HepG2 (cell line): ENCODE measurements at regions of chrX and their contacts with region 1.

Region 1: DNA sequence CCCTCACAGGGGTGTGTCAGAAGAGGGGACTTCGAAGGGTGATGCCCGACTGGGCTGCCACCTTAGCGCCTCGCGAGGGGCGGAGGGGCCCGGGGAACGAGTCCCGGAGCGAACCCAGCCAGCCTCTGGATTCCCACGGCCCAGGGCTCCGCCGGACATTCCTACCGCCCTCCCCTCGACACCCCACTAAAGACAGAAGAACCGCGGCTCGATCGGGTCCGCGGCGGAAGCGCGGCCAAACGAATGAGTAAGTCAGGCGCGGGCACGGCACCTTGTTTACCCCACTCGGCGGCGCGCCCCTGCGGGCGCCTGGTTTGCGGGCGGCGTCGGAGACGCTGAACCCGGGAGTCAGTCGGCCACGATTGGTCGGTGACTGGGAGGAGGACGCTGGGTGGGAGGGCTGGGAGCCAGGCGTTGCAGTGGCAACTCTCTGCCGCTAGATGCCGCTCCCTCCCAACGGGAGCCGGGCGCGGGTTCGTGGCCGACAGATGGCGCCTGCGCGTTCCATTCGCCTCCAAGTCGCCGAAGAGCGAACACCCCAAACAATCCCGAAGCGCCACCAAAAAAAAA is 1.4 kb upstream of the STAG2 start:
- DNase-seq: peak; percentile 78
- ATAC-seq: peak; percentile 86
- H3K4me3 ChIP-seq: peak overlapping the region; percentile 76 to 83 (median 78); a peak in 5 of 6 replicates
- H3K27ac ChIP-seq: peak overlapping the region; percentile 99
- H3K4me1 ChIP-seq: peaks cover 10% of the 10 kb centered on the region
- H3K27me3 ChIP-seq: no peaks in the 10 kb centered on the region; a peak in 1 of 5 replicates
- CTCF ChIP-seq: peak; percentile 86
- EP300 ChIP-seq: no peak
- POLR2A ChIP-seq: peak; percentile 64 to 68
- RAD21 ChIP-seq: peak; percentile 87

Region 2: DNA sequence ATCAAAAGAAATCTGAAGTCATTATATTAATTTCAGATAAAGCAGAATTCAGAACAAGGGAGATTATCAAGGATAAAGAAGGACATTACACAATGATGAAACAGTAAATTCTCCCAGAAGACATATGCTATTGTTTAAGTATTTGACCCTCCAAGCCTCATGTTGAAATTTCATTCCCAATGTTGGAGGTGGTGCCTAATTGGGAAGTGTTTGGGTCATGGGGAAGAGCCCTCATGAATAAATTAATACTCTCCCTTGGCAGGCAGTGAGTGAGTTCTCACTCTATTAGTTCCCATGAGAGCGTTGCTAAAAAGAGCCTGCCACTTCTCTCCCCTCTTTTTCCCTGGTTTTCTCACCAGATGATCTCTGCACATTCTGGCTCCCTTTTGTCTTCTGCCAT is 1026.0 kb before region 1 on chrX:
- CTCF ChIA-PET with region 1: no interaction called
- POLR2A ChIA-PET with region 1: no interaction called
- in situ Hi-C with region 1: no loop called
- intact Hi-C with region 1: no loop called
- DNase-seq: no peak
- ATAC-seq: no peak
- H3K4me3 ChIP-seq: no peak overlapping the region
- H3K27ac ChIP-seq: no peak overlapping the region
- H3K4me1 ChIP-seq: no peaks in the 10 kb centered on the region
- H3K27me3 ChIP-seq: no peaks in the 10 kb centered on the region
- CTCF ChIP-seq: no peak
- EP300 ChIP-seq: no peak
- POLR2A ChIP-seq: no peak
- RAD21 ChIP-seq: no peak

Region 3: DNA sequence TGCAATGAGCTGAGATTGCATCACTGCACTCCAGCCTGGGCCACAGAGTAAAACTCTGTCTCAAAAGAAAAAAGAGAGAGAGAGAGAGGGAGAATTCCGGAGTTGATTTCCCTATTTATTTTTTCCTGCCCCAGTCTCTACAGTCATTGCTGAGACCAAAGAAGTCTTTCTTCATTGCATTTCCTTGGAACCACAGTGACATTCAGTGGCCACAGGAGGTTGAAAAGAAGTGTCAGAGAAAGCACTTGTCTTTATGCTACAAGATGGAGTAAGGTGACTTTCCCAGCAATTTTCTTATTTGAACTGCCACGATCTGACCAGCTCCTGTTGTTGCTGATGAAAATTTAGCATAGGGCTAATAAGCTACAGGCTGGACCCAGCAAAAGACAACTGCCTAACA is 415.1 kb before region 1 on chrX:
- CTCF ChIA-PET with region 1: no interaction called
- POLR2A ChIA-PET with region 1: no interaction called
- in situ Hi-C with region 1: no loop called
- intact Hi-C with region 1: no loop called
- DNase-seq: no peak
- ATAC-seq: no peak
- H3K4me3 ChIP-seq: no peak overlapping the region
- H3K27ac ChIP-seq: no peak overlapping the region
- H3K4me1 ChIP-seq: no peaks in the 10 kb centered on the region
- H3K27me3 ChIP-seq: no peaks in the 10 kb centered on the region
- CTCF ChIP-seq: no peak
- EP300 ChIP-seq: no peak
- POLR2A ChIP-seq: no peak
- RAD21 ChIP-seq: no peak

Region 4: GRCh38 chrX:123846598-123847455 is 113.3 kb before region 1 on chrX:
- CTCF ChIA-PET with region 1: no interaction called
- POLR2A ChIA-PET with region 1: no interaction called
- in situ Hi-C with region 1: no loop called
- intact Hi-C with region 1: no loop called
- DNase-seq: no peak
- ATAC-seq: no peak
- H3K4me3 ChIP-seq: no peak overlapping the region
- H3K27ac ChIP-seq: no peak overlapping the region
- H3K4me1 ChIP-seq: no peaks in the 10 kb centered on the region; the same call in 1 of the 2 replicates
- H3K27me3 ChIP-seq: no peaks in the 10 kb centered on the region
- CTCF ChIP-seq: no peak
- EP300 ChIP-seq: no peak
- POLR2A ChIP-seq: no peak
- RAD21 ChIP-seq: no peak

Region 5: DNA sequence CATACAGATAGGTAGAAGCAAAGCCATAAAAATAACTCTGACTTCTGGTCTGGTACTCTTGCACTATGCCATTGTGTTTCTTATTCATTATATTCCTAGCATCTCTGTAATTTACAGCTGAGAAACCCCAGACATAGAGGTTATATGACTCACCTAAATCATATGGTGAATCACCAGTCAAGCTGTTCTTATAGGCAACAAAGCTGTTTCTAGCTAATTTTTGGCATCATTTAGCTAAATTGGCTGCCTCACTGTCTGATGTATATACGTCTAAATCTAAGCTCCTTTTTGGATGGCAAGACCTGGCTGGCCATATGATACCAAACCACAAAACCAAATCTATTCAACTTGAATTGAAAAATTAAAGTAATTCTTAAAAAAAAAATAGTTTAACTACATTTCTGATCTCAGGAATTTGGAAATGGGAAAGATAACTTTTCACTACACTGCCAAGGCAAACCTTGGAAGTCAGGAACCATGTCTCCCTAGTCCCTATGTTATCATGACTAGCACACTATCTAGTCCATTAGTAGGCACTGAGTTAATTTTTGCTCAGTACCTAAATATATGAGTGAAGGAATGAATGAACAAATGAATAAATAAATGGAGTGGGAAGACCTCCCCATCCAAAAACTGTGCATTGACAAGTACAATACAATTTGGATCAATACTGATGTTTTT is 39.9 kb before region 1 on chrX:
- CTCF ChIA-PET with region 1: no interaction called
- POLR2A ChIA-PET with region 1: no interaction called
- in situ Hi-C with region 1: no loop called
- intact Hi-C with region 1: no loop called
- DNase-seq: no peak
- ATAC-seq: no peak
- H3K4me3 ChIP-seq: no peak overlapping the region
- H3K27ac ChIP-seq: no peak overlapping the region
- H3K4me1 ChIP-seq: peaks cover 9% of the 10 kb centered on the region
- H3K27me3 ChIP-seq: no peaks in the 10 kb centered on the region
- CTCF ChIP-seq: no peak
- EP300 ChIP-seq: no peak
- POLR2A ChIP-seq: no peak
- RAD21 ChIP-seq: no peak

Region 6: GRCh38 chrX:123976706-123977316 is 16.7 kb after region 1 on chrX:
- CTCF ChIA-PET with region 1: interaction called, 7 read pairs
- POLR2A ChIA-PET with region 1: no interaction called
- in situ Hi-C with region 1: no loop called
- intact Hi-C with region 1: loop called (anchors 1 kb)
- DNase-seq: peak; percentile 31
- ATAC-seq: peak; percentile 51; the same call in 2 of the 3 replicates
- H3K4me3 ChIP-seq: no peak overlapping the region
- H3K27ac ChIP-seq: no peak overlapping the region
- H3K4me1 ChIP-seq: no peaks in the 10 kb centered on the region
- H3K27me3 ChIP-seq: no peaks in the 10 kb centered on the region
- CTCF ChIP-seq: peak; percentile 35; the same call in 1 of the 2 replicates
- EP300 ChIP-seq: no peak
- POLR2A ChIP-seq: no peak
- RAD21 ChIP-seq: peak; percentile 39; the same call in 1 of the 2 replicates

Region 7: DNA sequence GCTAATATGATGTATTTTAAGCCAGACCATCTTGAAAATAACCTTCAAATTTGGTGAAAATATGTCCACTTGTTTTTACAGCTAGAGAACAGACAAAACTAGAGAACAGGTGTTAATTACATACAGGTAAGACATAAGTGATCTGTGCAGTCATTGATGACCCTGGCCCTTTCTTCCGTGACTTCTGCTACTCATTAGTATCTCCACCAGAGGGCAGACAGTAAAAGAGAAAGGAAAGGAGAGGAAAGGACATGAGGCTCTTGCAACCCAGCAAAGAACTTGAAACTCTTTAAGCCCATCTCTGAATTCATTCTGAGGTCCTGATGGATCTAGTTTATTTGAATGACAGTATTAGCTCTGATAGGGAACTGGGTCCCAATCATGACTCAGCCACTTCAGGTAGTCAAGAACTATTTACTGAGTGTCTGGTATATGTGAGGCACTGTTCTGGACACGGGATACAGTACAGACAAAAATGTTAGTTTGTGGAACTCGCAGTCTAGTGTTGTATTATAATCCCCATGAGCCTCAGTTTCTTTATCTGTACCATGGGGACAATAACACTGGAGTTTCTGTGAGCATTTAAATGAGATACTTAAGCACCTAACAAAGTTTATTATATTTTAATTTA is 251.3 kb after region 1 on chrX:
- CTCF ChIA-PET with region 1: no interaction called
- POLR2A ChIA-PET with region 1: no interaction called
- in situ Hi-C with region 1: no loop called
- intact Hi-C with region 1: loop called (anchors 2 kb)
- DNase-seq: peak; percentile 28
- ATAC-seq: peak; percentile 83
- H3K4me3 ChIP-seq: no peak overlapping the region
- H3K27ac ChIP-seq: no peak overlapping the region
- H3K4me1 ChIP-seq: no peaks in the 10 kb centered on the region; the same call in 1 of the 2 replicates
- H3K27me3 ChIP-seq: no peaks in the 10 kb centered on the region
- CTCF ChIP-seq: peak; percentile 66
- EP300 ChIP-seq: no peak
- POLR2A ChIP-seq: no peak
- RAD21 ChIP-seq: no peak